Ascending aorta (tissue), 2 donors: ENCODE measurements at regions of chr22 and their contacts with region 1.

Region 1: DNA sequence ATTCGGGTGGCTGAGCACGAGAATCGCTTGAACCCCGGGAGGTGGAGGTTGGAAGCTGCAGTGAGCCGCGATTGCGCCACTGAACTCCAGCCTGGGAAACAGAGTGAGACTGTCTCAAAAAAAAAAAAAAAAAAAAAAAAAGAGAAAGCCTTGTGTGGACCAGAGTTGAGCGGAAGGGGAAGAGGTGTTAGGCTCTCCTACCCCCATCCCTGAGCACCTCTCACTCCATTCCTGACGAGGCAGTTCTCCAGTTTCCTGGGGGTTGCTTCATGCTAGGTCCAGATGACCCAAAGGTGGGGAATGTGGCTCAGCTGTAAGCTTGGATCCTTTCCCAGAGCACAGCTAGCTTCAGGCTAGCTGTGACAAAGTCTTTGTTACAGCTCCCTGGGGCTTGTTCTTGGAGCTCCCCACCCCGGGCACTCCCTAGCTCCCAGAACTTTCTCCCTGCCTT is 8.8 kb upstream of the DNAL4 start:
- DNase-seq: peak in 1 of 2 donors; percentile 88
- H3K4me3 ChIP-seq: no peak overlapping the region
- H3K27ac ChIP-seq: peak overlapping the region in 1 of 2 donors; percentile 19
- H3K4me1 ChIP-seq: peaks cover 0 to 3% of the 10 kb centered on the region in 2 donors
- H3K27me3 ChIP-seq: no peaks in the 10 kb centered on the region
- CTCF ChIP-seq: no peak

Region 2: DNA sequence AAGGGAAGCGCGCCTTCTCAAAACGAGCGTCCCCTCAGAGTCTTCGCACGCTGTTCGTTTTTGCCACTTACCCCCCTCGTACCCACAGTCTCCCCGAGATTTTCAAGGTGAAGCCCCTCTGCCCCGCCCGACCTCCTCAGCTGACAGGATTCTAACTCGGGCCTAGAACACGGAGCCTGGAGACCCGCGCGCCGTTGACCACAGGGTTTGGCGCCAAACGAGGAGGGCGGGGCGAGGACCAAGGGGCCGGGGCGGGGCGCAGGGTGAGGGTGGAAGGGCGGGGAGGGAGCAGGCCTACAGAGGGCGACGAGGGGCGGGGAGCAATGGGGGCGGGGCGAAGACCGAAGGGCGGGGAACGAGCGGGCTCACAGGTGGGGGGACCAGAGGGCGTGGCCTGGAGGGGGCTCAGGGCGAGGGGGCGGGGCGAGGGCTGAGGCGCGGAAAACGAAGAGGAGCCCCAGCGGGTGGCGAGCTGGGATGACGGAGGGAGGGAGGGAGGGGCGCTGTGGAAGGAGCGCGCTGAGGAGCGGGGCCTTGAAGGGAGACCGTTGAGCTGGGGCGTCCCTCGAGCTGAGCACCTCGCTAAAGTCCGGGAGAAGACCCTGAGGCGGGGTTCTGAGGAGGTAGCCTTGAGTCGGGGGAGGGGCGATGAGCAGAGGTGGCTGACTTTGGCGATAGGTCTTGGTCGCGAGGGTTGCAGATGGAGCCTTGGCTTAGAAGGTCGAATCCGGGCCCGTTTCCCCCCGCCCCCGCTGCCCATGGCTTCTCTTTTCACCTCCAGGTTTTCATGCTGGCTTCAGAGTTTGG is 232.5 kb before region 1 on chr22 and contains the start of gene DMC1:
- intact Hi-C with region 1: no loop called
- DNase-seq: peak; percentile 52 to 96
- H3K4me3 ChIP-seq: peak within 1 kb of the TSS; percentile 67 to 80
- H3K27ac ChIP-seq: peak within 1 kb of the TSS; percentile 91 to 95
- H3K4me1 ChIP-seq: peaks cover 4 to 35% of the 10 kb centered on the region in 2 donors
- H3K27me3 ChIP-seq: no peaks in the 10 kb centered on the region
- CTCF ChIP-seq: no peak
- total RNA-seq, gene DMC1: not detected

Region 3: GRCh38 chr22:38684895-38685294 is 117.8 kb before region 1 on chr22:
- intact Hi-C with region 1: no loop called
- DNase-seq: no peak
- H3K4me3 ChIP-seq: no peak overlapping the region
- H3K27ac ChIP-seq: no peak overlapping the region
- H3K4me1 ChIP-seq: peaks cover 0 to 3% of the 10 kb centered on the region in 2 donors
- H3K27me3 ChIP-seq: no peaks in the 10 kb centered on the region
- CTCF ChIP-seq: no peak

Region 4: DNA sequence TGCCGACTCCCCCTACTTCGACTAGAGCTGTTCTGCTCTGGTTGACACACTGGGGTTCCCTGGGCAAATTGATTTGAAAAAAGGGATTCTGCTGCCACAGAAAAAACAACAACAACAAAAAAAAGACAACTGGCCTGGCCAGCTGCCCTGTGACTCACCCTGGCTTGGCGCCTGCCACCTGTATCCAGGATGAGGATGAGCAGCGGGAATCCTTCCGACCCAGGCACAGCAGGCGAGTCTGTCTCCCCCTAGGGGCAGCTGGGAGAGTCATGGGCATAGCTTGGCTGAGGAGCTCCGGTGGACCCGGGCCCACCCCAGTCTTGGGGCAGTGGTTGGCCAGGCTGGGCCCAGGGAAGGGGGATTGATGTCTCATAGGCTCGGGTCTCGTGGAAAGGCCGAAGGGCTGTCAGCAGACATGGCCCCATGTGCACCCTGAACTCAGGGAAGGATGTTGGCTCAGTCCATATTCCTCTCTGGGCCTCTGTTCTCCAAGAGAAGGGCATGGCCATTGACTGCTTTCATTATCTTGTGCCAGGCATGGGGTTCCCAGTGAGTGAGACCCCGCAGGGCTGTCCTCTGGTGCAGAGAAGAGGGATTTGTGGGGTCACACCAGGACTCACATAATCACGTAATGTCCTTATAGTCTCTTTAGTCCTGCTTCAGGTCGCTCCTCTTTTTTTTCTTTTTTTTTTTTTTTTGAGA is 36.5 kb before region 1 on chr22:
- intact Hi-C with region 1: no loop called
- DNase-seq: no peak
- H3K4me3 ChIP-seq: no peak overlapping the region
- H3K27ac ChIP-seq: no peak overlapping the region
- H3K4me1 ChIP-seq: peaks cover 0 to 6% of the 10 kb centered on the region in 2 donors
- H3K27me3 ChIP-seq: no peaks in the 10 kb centered on the region
- CTCF ChIP-seq: peak; percentile 28 to 62 (median 52)

Region 5: GRCh38 chr22:38788021-38788816 is 14.5 kb before region 1 on chr22:
- intact Hi-C with region 1: loop called (anchors 2 kb)
- DNase-seq: peak in 1 of 2 donors; percentile 73
- H3K4me3 ChIP-seq: no peak overlapping the region
- H3K27ac ChIP-seq: peak overlapping the region; percentile 76 to 83
- H3K4me1 ChIP-seq: peaks cover 3 to 42% of the 10 kb centered on the region in 2 donors
- H3K27me3 ChIP-seq: no peaks in the 10 kb centered on the region
- CTCF ChIP-seq: no peak